H1 (cell line): ENCODE measurements at regions of chr6 and their contacts with region 1.

Region 1: DNA sequence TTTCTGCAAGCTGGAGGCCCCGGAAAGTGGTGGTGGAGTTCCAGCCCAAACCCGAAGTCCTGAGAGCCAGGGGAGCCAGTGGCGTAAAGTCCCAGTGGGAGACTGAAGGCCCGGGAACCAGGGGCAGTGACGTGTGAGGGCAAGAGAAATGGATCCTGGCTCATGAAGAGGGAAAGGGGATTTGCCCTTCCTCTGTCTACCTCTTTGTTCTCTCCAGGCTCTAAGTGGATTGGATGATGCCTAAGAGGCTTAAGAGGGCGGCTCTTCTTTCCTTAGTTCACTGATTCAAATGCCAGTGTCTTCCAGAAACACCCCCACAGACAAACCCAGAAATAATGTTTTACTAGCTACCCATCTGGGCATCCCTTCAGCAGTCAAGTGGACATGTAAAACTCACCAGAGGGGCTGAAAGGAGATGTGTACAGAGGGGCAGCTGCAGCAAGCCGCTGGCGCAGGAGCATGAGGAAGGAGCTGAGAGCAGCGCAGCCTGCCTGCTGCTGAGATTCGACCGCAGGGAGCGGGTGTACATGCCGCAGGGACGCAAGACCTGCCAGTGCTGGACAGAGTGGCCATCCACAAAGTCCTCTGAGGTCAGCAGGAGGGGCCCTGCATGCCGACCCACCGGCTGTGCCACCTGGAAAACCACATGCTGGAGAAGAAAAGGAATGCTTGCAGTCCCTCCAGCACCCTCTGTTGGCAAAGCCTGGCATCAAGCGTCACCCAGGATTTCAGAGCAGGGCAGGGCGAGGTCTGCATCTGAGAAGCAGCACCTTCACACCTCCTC is 29.5 kb downstream of the CDYL start:
- DNase-seq: peak in 1 of 2 experiments; percentile 80
- H3K4me3 ChIP-seq: no peak overlapping the region; a peak in 2 of 8 replicates
- H3K27ac ChIP-seq: no peak overlapping the region
- H3K4me1 ChIP-seq: peaks cover 5 to 19% (median 11%) of the 10 kb centered on the region in 4 experiments
- H3K27me3 ChIP-seq: no peaks in the 10 kb centered on the region
- CTCF ChIP-seq: peak; percentile 68 to 91 (median 80)
- EP300 ChIP-seq: no peak
- POLR2A ChIP-seq: no peak
- RAD21 ChIP-seq: peak; percentile 72 to 76

Region 2: DNA sequence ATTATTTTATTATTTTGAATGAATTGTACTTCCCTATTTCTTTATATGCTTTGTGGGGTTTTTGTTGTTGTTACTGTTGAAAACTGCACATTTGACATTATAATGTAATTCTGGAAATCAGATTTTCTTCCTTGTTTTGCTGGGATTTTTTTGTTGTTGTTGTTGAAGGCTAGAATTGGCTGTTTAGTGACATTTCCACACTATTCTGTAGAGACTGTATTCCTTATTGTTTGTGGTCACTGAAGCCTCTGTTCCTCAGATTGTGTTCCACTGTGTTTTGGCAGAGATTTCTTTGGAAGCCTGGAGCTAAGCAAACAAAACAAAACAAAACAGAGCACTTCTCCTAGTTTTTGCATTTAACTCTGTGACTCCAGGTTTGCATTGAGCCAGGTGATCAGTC is 23.3 kb after region 1 on chr6:
- CTCF ChIA-PET with region 1: interaction called, 10 read pairs
- POLR2A ChIA-PET with region 1: no interaction called
- DNase-seq: no peak
- H3K4me3 ChIP-seq: no peak overlapping the region
- H3K27ac ChIP-seq: no peak overlapping the region
- H3K4me1 ChIP-seq: no peaks in the 10 kb centered on the region
- H3K27me3 ChIP-seq: no peaks in the 10 kb centered on the region
- CTCF ChIP-seq: no peak
- EP300 ChIP-seq: no peak
- POLR2A ChIP-seq: no peak
- RAD21 ChIP-seq: no peak